Caco-2 (cell line): ENCODE measurements at regions of chr10 and their contacts with region 1.

Region 1: DNA sequence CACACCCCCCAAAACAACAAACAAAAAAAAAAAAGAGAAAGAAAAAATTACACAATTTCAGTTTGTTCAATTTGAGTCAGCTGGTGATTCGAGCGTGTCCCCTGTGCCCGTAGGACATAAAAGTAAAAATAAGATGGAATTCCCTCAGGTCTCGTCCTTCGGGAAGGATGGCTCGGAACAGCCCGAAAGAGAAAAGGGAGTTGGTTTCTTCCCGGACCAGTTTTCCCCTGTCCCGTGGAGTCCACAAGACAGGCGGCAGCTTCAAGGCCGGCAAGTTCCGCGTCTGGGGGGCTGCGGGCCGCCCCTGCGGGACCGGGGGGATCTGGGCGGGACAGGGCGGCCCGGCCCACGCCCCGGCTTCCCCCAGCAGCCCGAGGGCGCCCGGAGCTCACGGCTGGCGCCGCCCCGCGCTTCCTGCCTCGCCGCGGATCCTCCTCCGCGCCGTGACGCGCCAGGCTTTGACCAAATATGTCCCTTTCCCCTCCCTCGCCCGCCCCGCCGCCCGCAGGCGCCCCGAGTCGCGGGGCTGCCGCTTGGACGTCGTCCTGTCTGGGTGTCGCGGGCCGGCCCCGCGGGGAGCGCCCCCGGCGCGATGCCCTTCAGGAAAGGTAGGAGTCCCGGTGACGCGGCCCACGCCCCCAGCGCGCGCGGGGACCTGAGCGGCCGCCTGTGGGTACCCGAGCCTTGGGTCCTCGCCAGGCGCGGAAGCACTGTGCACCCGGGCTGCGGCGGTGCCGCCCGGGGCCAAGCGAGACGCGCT is 55.8 kb downstream of the RBM17 start:
- DNase-seq: peak; percentile 88 to 92
- H3K4me3 ChIP-seq: peak overlapping the region; percentile 94
- H3K4me3 Mint-ChIP-seq: peak overlapping the region; percentile 90
- H3K27ac Mint-ChIP-seq: peak overlapping the region; percentile 66
- H3K4me1 ChIP-seq: peaks cover 10% of the 10 kb centered on the region; the same call in 1 of the 2 replicates
- H3K4me1 Mint-ChIP-seq: peaks cover 6% of the 10 kb centered on the region
- H3K27me3 ChIP-seq: no peaks in the 10 kb centered on the region
- H3K27me3 Mint-ChIP-seq: peaks cover 1% of the 10 kb centered on the region
- CTCF ChIP-seq: no peak

Region 2: GRCh38 chr10:6108603-6109443 is 35.8 kb before region 1 on chr10:
- CTCF ChIA-PET with region 1: interaction called, 3 read pairs
- POLR2A ChIA-PET with region 1: no interaction called
- intact Hi-C with region 1: loop called (anchors 2 kb)
- DNase-seq: peak in 1 of 2 experiments; percentile 47
- H3K4me3 ChIP-seq: no peak overlapping the region
- H3K4me3 Mint-ChIP-seq: no peak overlapping the region
- H3K27ac Mint-ChIP-seq: no peak overlapping the region
- H3K4me1 ChIP-seq: no peaks in the 10 kb centered on the region
- H3K4me1 Mint-ChIP-seq: no peaks in the 10 kb centered on the region
- H3K27me3 ChIP-seq: no peaks in the 10 kb centered on the region
- H3K27me3 Mint-ChIP-seq: no peaks in the 10 kb centered on the region
- CTCF ChIP-seq: peak; percentile 61 to 85